Activated CD8-positive, alpha-beta T cell treated with anti-CD3 and anti-CD28 coated beads for 36 hours (primary cell): ENCODE measurements at regions of chr2 and their contacts with region 1.

Region 1: GRCh38 chr2:95345566-95346230 is 48.6 kb downstream of the KCNIP3 start:
- DNase-seq: peak; percentile 74
- ATAC-seq: peak; percentile 87
- H3K4me3 Mint-ChIP-seq: peak overlapping the region; percentile 70
- H3K27ac Mint-ChIP-seq: no peak overlapping the region
- H3K4me1 Mint-ChIP-seq: no peaks in the 10 kb centered on the region
- H3K27me3 Mint-ChIP-seq: peaks cover 32% of the 10 kb centered on the region
- CTCF ChIP-seq: peak; percentile 90

Region 2: DNA sequence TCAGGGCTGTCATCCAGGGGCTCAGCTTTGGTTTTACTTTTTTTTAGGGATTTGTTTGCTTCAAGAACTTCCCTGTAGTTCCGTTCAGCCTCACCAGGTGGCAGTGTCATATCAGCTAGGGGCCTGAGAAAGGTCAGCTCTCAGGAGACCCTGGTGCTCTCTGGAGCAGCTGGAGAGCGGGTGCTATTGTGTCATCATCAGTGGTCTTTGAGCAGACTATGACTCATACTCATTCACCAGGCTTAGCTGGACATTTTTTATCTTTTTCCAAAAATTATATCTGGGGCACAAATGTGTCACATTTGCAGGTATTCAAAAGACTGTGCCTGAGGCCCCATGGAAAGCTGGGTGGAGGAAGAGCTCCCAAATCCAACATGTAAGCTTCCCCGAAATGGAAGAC is 114.0 kb before region 1 on chr2:
- CTCF ChIA-PET with region 1: interaction called, 11 read pairs
- POLR2A ChIA-PET with region 1: no interaction called
- intact Hi-C with region 1: no loop called
- DNase-seq: peak; percentile 70
- ATAC-seq: no peak
- H3K4me3 Mint-ChIP-seq: no peak overlapping the region
- H3K27ac Mint-ChIP-seq: no peak overlapping the region
- H3K4me1 Mint-ChIP-seq: no peaks in the 10 kb centered on the region
- H3K27me3 Mint-ChIP-seq: no peaks in the 10 kb centered on the region
- CTCF ChIP-seq: peak; percentile 60

Region 3: GRCh38 chr2:95333888-95334338 is 11.8 kb before region 1 on chr2:
- CTCF ChIA-PET with region 1: interaction called, 11 read pairs
- POLR2A ChIA-PET with region 1: no interaction called
- intact Hi-C with region 1: no loop called
- DNase-seq: no peak
- ATAC-seq: no peak
- H3K4me3 Mint-ChIP-seq: no peak overlapping the region
- H3K27ac Mint-ChIP-seq: no peak overlapping the region
- H3K4me1 Mint-ChIP-seq: no peaks in the 10 kb centered on the region
- H3K27me3 Mint-ChIP-seq: no peaks in the 10 kb centered on the region
- CTCF ChIP-seq: no peak

Region 4: GRCh38 chr2:95379371-95379831 is 33.7 kb after region 1 on chr2:
- CTCF ChIA-PET with region 1: interaction called, 10 read pairs
- POLR2A ChIA-PET with region 1: no interaction called
- intact Hi-C with region 1: no loop called
- DNase-seq: peak; percentile 46
- ATAC-seq: no peak
- H3K4me3 Mint-ChIP-seq: no peak overlapping the region
- H3K27ac Mint-ChIP-seq: no peak overlapping the region
- H3K4me1 Mint-ChIP-seq: no peaks in the 10 kb centered on the region
- H3K27me3 Mint-ChIP-seq: peaks cover 4% of the 10 kb centered on the region
- CTCF ChIP-seq: no peak

Region 5: DNA sequence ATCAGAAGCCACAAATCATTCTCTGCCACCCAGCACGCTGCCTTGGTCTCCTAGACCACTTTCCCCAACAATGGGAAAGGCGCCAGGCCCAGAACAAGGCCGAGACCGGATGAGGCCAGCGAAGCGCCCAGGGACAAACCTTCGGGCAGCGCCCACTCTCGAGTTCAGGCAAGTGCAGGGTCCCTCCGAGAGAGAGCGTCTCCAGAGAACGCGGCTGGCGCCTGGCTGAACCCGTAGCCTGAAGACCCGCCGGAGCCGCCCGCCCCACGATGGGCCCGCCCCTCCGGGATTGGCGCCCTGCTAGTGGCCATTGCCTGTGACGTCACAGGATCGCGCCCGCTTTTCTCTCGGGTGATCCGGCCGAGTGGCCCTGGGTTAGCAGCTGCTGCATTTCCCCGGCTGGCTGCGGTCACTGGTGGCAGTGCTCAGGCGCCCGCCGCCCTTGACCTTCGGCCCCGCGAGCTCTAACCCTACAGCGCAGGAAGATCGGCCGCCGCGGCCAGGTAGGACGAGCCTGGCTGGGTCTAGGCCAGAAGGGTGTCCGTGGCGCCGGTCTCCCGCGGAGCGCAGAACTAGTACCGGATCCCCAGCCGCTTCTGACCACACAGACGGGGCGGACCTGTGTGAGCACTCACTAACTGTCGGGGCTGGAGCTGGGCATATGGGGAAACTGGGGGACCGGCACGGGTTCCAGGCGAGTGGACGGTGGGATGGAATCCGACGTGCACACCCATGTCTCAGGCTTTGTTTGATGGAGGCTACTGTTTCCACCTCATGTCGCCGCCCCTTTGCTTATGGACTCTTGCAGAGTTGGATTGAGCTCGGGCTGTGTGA is 56.9 kb after region 1 on chr2 and contains the start of gene FAHD2A:
- CTCF ChIA-PET with region 1: interaction called, 16 read pairs
- POLR2A ChIA-PET with region 1: interaction called, 3 read pairs
- intact Hi-C with region 1: no loop called
- DNase-seq: peak; percentile 98
- ATAC-seq: peak; percentile 95
- H3K4me3 Mint-ChIP-seq: peak within 1 kb of the TSS; percentile 96
- H3K27ac Mint-ChIP-seq: peak within 1 kb of the TSS; percentile 95
- H3K4me1 Mint-ChIP-seq: peaks cover 16% of the 10 kb centered on the region
- H3K27me3 Mint-ChIP-seq: no peaks in the 10 kb centered on the region
- CTCF ChIP-seq: no peak
- total RNA-seq, gene FAHD2A: 40.8 to 44.0 TPM